ENCODE measurements at regions of chr3 and their contacts with region 1.

Region 1: DNA sequence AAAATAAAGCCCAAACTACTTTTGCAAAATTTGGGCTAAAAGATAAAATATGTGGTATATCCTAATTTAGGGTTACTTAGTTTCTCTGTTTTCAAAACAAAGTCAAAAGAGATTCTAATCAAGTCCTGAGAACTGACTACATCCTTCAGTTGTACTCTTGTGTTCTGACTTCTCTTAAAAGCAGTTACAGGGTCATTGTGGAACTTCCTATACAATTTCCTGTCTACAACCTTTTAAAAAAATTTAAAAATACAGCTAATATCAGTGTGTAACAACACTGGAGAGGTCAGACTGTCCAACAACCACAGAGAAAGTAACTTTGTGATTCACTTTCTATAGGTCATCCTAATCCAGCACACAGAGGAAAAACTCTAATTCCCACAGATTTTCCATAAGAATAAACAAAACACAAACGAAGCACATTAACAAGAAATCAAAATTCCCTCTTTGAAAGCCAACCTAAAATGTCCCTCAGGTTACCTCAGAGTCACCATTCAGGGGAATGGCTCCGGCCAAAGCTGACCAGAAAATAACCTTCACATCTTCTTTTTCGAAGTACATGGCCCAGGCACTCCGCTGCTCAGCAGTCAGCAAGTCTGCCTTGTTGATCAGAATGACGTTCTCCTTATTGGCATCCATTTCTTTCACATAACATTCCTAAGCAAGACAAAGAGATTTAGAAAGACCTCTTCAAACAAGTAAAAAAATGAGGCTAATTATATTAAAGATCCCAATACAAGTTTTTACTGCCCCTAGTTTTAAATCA is 13.3 kb downstream of the LSG1 start:
- DNase-seq: no peak
- H3K4me3 Mint-ChIP-seq: no peak overlapping the region
- H3K27ac Mint-ChIP-seq: no peak overlapping the region
- H3K4me1 Mint-ChIP-seq: peaks cover 12% of the 10 kb centered on the region
- H3K27me3 Mint-ChIP-seq: no peaks in the 10 kb centered on the region

Region 2: GRCh38 chr3:194671900-194672808 is 13.5 kb after region 1 on chr3 and contains the start of gene LSG1:
- CTCF ChIA-PET with region 1: interaction called, 16 read pairs
- DNase-seq: peak; percentile 92
- H3K4me3 Mint-ChIP-seq: peak within 1 kb of the TSS; percentile 98
- H3K27ac Mint-ChIP-seq: peak within 1 kb of the TSS; percentile 97
- H3K4me1 Mint-ChIP-seq: peaks cover 35% of the 10 kb centered on the region
- H3K27me3 Mint-ChIP-seq: peaks cover 27% of the 10 kb centered on the region

Region 3: DNA sequence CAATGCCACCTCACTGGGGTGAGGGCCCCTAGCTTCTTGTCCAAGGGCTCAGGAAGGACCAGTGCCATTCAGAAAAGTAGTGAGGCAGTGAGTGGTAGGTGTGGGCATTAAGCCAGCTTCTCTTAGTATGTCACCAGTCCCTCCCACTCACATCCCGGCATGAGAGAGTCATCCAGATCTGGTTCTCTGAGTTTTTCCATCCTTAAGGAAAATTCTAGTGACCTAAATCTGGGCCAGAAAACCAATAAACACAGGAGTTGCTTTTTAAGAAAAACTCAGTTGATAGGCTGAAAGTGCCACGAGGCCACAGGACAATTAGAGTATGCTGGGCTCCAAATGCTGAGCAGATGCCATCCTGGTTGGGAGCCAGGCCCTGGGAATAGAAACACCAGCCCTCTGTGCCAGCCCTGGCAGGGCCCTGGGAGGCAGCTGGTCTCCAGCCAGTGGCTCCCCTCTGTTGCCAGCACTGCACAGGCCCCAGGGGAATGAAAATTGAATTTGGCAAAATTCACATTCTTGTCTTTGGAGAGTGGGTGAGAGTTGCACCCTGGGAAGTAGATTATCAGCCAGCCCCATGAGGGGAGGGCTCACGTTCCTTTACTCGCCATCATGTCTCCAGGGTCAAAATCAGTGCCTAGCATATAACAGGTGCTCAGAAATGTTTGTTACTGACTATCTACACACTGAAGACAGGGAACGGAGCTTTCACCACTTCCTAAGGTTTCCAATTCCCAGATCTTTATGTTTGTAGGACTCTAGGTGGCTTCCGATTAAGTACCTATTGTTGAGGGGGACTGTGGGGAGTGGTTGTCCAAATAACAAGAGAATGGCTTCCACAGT is 79.8 kb after region 1 on chr3:
- CTCF ChIA-PET with region 1: no interaction called
- DNase-seq: no peak
- H3K4me3 Mint-ChIP-seq: no peak overlapping the region
- H3K27ac Mint-ChIP-seq: no peak overlapping the region
- H3K4me1 Mint-ChIP-seq: no peaks in the 10 kb centered on the region
- H3K27me3 Mint-ChIP-seq: peaks cover 24% of the 10 kb centered on the region

Measured in activated naive CD4-positive, alpha-beta T cell treated with anti-CD3 and anti-CD28 coated beads, Interleukin-2, amount 10 ng/mL, durations not matched to agents 7 days and 5 days (primary cell).